Colonic mucosa (tissue), 4 donors: ENCODE measurements at regions of chr10 and their contacts with region 1.

Region 1: DNA sequence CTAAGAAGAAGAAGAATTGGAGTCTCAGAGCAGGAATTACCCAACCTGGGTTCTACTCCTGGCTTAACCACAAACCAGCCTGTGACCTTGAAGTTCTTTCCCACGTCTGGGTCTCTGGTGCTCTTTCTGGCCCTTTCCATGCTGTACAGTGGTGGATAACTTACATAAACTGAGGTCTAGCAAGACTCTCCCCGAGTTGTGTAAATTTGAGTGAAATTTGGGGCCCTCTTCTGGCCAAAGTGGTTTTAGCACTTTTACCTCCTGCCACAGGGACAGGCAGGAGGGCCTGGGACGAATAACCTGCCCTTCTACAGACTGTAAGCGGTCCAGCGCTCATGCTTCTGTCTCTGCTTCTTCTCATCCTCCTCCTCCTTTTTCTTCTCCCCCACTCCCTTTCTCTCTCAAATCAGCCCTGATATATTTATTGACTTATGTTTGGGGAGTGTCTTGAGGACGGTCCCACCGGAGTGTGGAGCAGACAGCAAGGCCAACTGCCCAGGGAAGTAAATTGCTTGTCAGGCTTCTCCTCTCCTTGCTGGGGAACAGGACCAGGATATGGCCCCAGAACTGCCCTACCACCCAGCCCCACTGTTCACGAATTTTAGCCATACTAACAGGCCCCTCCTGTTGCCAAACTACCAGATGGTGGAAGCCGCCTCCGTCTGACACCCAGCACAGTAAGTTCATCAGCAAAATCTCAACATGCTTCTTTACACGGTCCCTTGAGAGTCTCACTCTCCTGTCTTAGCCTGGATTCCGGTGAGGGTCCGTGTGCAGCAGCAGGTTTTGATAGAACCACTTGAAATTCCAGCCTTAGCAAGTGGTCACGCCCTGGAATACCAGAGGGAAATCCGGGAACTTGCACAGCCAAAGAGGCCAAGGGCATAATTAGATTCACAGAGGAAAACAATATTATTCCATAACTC is 4.0 kb upstream of the SH3PXD2A start:
- DNase-seq: peak; percentile 84
- H3K4me3 ChIP-seq: no peak overlapping the region
- H3K27ac ChIP-seq: no peak overlapping the region
- H3K4me1 ChIP-seq: no peaks in the 10 kb centered on the region
- H3K27me3 ChIP-seq: no peaks in the 10 kb centered on the region
- CTCF ChIP-seq: peak; percentile 60

Region 2: GRCh38 chr10:103470761-103471653 is 388.4 kb before region 1 on chr10:
- intact Hi-C with region 1: no loop called
- DNase-seq: peak; percentile 41
- H3K4me3 ChIP-seq: no peak overlapping the region
- H3K27ac ChIP-seq: peak overlapping the region; percentile 53
- H3K4me1 ChIP-seq: no peaks in the 10 kb centered on the region
- H3K27me3 ChIP-seq: no peaks in the 10 kb centered on the region
- CTCF ChIP-seq: no peak

Region 3: DNA sequence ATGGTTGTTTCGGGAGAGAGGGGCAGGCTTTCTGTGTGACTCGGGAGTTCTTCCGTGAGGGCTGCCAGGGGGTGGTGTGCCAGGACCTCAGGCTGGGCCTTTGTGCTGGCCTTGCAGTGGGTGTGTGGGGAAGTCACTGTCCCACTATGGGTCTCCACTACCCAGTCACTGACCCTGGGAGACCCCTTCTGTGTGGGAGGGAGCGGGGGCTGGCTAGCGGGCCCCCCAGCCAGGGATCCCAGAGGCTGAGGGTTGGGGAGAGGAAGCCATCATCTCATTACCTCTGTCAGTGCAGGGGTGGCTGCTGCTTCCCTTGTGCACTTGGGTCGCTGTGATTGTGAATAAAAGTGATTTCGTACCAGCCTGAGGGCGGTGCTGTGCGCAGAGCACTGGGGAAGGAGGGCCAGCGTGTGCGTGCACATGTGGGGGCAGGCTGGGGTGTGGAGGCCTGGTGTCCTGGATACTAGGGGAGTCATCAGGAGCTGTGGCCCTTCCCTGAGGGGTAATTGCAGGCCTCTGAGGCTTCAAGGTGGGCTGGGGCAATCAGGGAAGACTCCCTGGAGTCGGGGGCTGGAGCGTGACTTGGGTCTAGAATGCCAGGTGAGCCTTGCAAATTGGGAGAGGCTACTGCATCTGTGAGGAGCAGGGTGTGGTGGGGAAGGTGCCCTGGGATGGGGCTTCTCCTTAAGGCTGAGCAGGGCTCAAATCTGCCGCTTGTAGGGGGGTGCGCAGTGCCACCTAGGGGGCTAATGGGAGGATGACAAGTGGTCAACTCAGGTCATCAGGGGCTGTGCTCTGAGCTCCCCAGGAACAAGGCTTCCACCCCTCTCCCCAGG is 267.0 kb before region 1 on chr10:
- intact Hi-C with region 1: loop called (anchors 5 kb)
- DNase-seq: no peak
- H3K4me3 ChIP-seq: no peak overlapping the region
- H3K27ac ChIP-seq: no peak overlapping the region
- H3K4me1 ChIP-seq: peaks cover 3% of the 10 kb centered on the region
- H3K27me3 ChIP-seq: no peaks in the 10 kb centered on the region
- CTCF ChIP-seq: peak; percentile 37

Region 4: DNA sequence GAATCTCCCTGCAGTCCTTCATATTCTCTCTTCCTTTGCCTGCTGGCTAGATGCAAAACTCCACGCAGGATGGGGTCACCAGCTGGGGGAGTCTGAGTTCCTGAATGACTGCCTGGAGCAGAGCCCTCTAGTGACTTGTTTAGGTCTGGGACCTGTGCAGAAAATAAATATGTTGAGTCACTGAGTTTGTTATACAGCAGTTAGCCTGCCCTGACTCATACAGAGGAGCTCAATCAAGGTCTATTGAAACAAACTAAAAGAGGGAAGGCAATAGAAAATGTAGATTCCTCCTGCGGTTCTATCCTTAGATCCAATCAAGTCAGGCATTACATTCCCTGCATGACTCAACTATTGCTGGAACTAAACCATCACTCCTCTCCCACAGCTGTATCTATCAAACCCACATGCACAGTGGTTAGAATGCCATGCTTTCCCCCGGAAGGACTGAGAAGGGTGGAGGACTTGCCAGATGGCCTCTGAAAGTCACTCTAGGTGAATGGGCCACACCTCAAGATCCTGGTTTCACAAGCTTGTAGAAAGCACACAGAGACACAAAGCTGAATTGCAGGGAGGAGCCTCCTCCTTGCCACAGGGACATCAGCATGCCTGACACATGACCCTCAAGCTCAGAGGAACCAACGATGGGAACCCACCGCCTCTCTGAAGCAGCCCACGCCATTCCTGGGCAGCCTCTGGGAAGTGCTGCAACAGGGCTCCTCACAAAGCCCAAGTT is 77.9 kb before region 1 on chr10:
- intact Hi-C with region 1: loop called (anchors 10 kb)
- DNase-seq: peak; percentile 82
- H3K4me3 ChIP-seq: no peak overlapping the region
- H3K27ac ChIP-seq: peak overlapping the region; percentile 62
- H3K4me1 ChIP-seq: peaks cover 20% of the 10 kb centered on the region
- H3K27me3 ChIP-seq: no peaks in the 10 kb centered on the region
- CTCF ChIP-seq: peak; percentile 31

Region 5: DNA sequence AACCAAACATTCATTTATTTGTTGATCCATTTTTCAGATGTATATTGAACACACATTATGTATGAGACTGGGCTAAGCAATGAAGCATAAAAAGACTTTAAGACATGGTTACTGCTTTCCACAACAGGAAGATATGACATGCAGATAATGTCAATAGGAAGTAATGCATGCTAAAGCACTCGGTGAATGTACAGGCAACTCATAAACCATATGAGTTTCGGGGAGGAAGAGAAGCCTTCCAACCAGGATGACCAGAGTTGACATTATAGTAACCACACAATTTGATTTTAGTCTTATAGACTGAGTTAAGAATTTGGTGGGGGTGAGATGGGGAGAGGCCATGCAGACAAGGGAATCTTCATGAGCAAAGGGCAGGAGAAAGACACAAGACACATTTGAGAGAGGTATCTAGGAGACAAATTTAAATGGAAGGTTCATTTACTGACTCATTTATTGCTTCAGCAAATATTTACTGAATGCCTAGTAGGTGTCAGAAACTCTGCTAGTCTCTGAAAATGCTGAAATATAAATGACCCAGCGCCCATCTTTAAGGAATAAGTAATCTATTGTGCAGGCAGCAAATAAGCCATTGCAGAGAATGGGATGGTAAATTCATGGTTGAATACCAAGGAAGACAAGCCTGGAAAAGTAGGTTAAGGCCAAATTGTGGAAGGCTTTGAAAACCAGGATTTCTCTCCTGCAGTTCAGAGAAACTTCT is 88.5 kb after region 1 on chr10:
- intact Hi-C with region 1: no loop called
- DNase-seq: no peak
- H3K4me3 ChIP-seq: no peak overlapping the region
- H3K27ac ChIP-seq: no peak overlapping the region
- H3K4me1 ChIP-seq: no peaks in the 10 kb centered on the region
- H3K27me3 ChIP-seq: no peaks in the 10 kb centered on the region
- CTCF ChIP-seq: no peak